GM12878 (cell line): ENCODE measurements at regions of chr22 and their contacts with region 1.

Region 1: GRCh38 chr22:39003165-39003638 is 10.9 kb upstream of the APOBEC3C start:
- DNase-seq: peak; percentile 81
- ATAC-seq: peak; percentile 99
- H3K4me3 ChIP-seq: no peak overlapping the region
- H3K27ac ChIP-seq: no peak overlapping the region
- H3K4me1 ChIP-seq: peaks cover 7% of the 10 kb centered on the region
- H3K27me3 ChIP-seq: no peaks in the 10 kb centered on the region
- CTCF ChIP-seq: peak; percentile 69 to 76 (median 75)
- EP300 ChIP-seq: no peak
- POLR2A ChIP-seq: no peak
- RAD21 ChIP-seq: peak; percentile 74

Region 2: DNA sequence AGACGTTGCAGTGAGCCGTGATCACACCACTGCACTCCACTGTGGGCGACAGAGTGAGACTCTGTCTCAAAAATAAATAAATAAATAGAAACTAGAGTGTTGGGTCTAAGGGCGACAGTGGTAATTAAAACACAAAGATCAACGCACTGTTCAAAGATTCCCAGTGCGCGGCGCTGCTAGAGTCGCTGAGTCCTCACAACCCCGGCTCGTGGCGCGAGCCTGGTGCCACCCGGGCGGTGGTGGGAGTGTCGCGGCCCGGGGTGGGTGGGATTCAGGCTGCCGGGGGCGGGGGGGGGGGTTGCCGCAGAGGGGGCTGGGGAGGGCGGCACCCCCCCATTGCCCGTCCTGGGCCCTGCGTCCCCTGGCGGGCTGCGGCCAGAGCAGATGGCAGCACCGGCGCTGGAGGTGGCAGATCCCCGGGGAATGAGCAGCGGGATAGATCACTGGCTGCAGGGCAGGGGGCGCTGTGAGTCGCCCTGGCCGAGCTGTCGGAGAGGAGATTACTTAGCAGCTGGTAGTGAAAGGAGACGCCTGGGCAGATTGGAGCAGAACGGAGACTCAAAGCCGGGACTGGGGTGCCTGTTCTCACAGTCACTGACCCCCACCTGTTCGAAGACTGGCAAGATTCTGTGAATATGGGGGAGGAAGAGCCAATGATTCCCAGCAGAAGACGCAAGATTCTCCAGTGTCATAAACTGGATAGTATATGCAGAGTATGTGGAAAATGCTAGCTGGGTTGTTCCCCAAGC is 76.0 kb before region 1 on chr22:
- CTCF ChIA-PET with region 1: interaction called, 14 read pairs
- POLR2A ChIA-PET with region 1: interaction called, 5 read pairs
- RAD21 ChIA-PET with region 1: interaction called, 4 read pairs
- SMC1A ChIA-PET with region 1: interaction called, 3 read pairs
- in situ Hi-C with region 1: no loop called
- intact Hi-C with region 1: loop called (anchors 5 kb)
- DNase-seq: peak; percentile 7
- ATAC-seq: peak; percentile 96
- H3K4me3 ChIP-seq: no peak overlapping the region
- H3K27ac ChIP-seq: no peak overlapping the region
- H3K4me1 ChIP-seq: no peaks in the 10 kb centered on the region
- H3K27me3 ChIP-seq: peaks cover 1 to 7% of the 10 kb centered on the region in 2 experiments; a peak in 2 of 4 replicates
- CTCF ChIP-seq: peak; percentile 57 to 70 (median 65)
- EP300 ChIP-seq: no peak
- POLR2A ChIP-seq: no peak
- RAD21 ChIP-seq: peak; percentile 48

Region 3: GRCh38 chr22:38967451-38968450 is 35.5 kb before region 1 on chr22:
- CTCF ChIA-PET with region 1: interaction called, 24 read pairs
- POLR2A ChIA-PET with region 1: no interaction called
- RAD21 ChIA-PET with region 1: interaction called, 39 read pairs
- SMC1A ChIA-PET with region 1: interaction called, 50 read pairs
- in situ Hi-C with region 1: no loop called
- intact Hi-C with region 1: no loop called
- DNase-seq: no peak
- ATAC-seq: peak; percentile 75
- H3K4me3 ChIP-seq: no peak overlapping the region
- H3K27ac ChIP-seq: no peak overlapping the region
- H3K4me1 ChIP-seq: peaks cover 9% of the 10 kb centered on the region
- H3K27me3 ChIP-seq: no peaks in the 10 kb centered on the region; a peak in 1 of 4 replicates
- CTCF ChIP-seq: no peak
- EP300 ChIP-seq: no peak
- POLR2A ChIP-seq: no peak
- RAD21 ChIP-seq: no peak

Region 4: DNA sequence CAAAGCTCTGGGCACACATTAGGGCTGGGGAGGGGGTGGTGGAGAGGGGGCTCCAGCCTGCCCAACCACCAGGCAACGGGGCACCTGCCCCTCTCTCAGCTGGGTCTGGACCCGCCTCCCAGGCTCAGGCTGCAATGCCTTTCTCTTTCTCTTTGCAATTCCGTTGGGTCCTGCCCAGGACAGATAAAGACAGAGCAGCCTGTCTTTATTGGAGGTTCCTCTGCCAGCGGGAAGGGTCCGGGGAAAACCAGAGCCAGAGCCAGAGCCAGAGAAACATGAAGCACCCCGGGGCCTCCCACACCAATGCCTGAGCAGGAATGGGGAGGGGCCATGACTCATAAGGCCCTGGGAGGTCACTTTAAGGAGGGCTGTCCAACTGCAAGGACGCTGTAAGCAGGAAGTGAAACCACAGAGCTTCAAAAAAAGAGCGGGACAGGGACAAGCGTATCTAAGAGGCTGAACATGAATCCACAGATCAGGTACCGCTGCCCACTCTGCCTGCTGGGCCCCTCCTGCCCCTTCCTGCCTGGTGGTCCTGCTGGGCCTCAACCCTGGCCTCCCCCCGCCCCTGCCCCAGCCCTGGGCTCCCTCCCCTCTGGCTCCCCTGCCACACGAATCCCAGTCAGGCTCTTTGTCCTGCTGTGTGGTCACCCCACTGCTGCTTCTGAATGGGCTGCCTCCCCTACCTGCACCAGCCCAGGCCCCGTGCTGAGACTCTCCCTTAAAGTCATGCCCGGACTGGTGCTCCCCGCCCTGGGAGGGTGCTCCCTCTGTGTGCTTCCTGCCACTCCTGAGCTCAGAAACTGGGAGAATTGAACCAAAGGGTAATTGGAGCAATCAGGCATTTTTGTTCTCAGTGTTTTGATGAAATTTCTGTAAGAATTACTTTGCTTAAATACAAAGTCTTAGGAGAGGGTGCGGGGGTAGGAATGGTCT is 20.9 kb before region 1 on chr22 and contains the start of gene APOBEC3B:
- CTCF ChIA-PET with region 1: interaction called, 32 read pairs
- POLR2A ChIA-PET with region 1: no interaction called
- RAD21 ChIA-PET with region 1: interaction called, 11 read pairs
- SMC1A ChIA-PET with region 1: interaction called, 25 read pairs
- in situ Hi-C with region 1: no loop called
- intact Hi-C with region 1: no loop called
- DNase-seq: peak; percentile 85
- ATAC-seq: peak; percentile 84
- H3K4me3 ChIP-seq: peak within 1 kb of the TSS; percentile 64
- H3K27ac ChIP-seq: peak within 1 kb of the TSS; percentile 67
- H3K4me1 ChIP-seq: peaks cover 34% of the 10 kb centered on the region
- H3K27me3 ChIP-seq: no peaks in the 10 kb centered on the region
- CTCF ChIP-seq: no peak
- EP300 ChIP-seq: no peak
- POLR2A ChIP-seq: peak; percentile 42; the same call in 1 of the 2 replicates
- RAD21 ChIP-seq: no peak
- polyA plus RNA-seq, gene APOBEC3B: 56.6 to 75.1 TPM

Region 5: DNA sequence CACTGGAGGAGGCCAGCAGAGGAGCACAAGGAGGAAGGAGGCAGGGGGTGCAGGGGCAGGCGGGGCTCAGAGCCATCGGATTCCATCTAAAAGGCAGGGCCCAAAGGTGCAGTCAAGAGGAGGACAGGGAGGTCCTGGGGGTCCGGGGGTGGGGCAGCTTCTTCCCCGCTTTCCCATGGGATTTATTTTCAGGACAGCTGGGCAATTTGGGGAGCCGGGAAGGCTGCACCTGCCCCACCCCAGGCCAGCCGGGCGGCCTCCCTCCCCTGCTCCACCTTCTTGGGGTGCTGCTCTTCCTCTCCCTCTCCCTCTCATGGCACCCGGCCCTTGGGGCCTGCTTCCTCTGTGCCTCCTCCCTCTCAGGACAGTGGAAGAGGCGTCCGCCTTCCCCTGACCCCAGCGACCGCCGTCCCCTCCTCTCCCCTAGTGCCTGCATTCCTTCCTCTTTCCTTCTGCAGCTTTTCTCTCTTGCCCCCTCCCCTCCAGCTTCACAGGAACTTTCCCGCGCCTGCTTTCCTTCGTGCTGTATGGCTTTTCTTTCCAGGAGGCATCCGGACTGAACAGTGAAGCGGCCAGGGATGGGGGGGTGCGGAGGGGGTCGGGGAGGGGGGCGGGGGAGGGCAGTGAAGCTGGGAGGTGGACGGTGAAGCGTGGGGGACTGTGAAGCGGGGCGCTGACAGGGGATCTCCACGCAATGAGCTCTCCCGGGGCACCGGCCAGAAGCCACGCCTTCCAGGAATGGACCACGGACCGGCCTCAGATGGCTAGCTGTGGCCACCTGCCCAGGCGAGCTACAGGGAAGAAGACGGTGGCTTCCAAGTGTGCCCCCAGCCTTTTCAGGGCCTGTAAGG is 120.8 kb after region 1 on chr22:
- CTCF ChIA-PET with region 1: interaction called, 74 read pairs
- POLR2A ChIA-PET with region 1: interaction called, 8 read pairs
- RAD21 ChIA-PET with region 1: interaction called, 13 read pairs
- SMC1A ChIA-PET with region 1: interaction called, 11 read pairs
- in situ Hi-C with region 1: loop called (anchors 5 kb)
- intact Hi-C with region 1: loop called (anchors 2 kb)
- DNase-seq: no peak
- ATAC-seq: no peak
- H3K4me3 ChIP-seq: no peak overlapping the region
- H3K27ac ChIP-seq: no peak overlapping the region
- H3K4me1 ChIP-seq: no peaks in the 10 kb centered on the region
- H3K27me3 ChIP-seq: no peaks in the 10 kb centered on the region
- CTCF ChIP-seq: no peak
- EP300 ChIP-seq: no peak
- POLR2A ChIP-seq: no peak
- RAD21 ChIP-seq: no peak

Region 6: DNA sequence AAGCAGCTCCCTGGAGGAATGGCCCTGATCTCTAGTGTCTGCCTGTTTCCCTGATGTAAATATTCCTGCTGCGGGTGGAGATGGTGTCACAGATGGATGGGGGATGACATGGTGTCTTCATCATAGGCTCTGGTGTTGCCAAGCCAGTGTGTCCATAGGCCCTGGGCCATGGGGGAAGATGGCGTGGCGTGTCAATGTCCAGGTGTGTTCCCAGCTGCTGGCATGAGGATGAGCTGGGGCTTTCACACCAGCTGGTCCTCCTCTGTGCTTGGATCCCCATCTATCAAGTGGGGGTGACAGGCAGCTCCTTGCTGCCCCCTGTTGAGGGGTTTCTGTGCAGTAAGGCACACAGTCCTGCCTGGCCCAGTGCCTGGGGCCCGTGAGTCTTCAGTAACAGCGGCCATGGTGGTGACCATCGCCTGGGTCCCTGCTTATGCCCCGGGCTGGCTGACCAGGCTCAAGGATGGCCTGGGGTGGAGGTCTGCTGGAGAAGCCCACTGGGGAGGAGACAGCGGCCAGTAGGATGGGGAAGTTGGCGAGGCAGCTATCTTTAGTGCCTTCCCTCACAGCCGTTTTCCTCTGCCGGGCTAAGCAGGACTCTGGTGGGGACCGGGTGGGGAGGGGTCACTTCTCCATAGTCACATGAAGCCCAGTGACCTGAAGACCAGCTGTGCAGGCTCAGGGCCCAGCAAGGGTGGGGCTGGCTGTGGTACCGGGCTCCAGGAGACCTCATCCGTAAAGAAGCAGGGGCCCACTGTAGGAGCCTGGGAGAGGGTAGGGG is 303.6 kb after region 1 on chr22:
- CTCF ChIA-PET with region 1: interaction called, 6 read pairs
- POLR2A ChIA-PET with region 1: no interaction called
- RAD21 ChIA-PET with region 1: interaction called, 4 read pairs
- SMC1A ChIA-PET with region 1: interaction called, 3 read pairs
- in situ Hi-C with region 1: loop called (anchors 5 kb)
- intact Hi-C with region 1: loop called (anchors 5 kb)
- DNase-seq: no peak
- ATAC-seq: peak; percentile 39; the same call in 2 of the 3 replicates
- H3K4me3 ChIP-seq: no peak overlapping the region
- H3K27ac ChIP-seq: no peak overlapping the region
- H3K4me1 ChIP-seq: peaks cover 10% of the 10 kb centered on the region
- H3K27me3 ChIP-seq: no peaks in the 10 kb centered on the region
- CTCF ChIP-seq: peak; percentile 55 to 66 (median 57)
- EP300 ChIP-seq: no peak
- POLR2A ChIP-seq: no peak
- RAD21 ChIP-seq: peak; percentile 78